Activated CD8-positive, alpha-beta memory T cell treated with anti-CD3 and anti-CD28 coated beads, Interleukin-2, amount 10 ng/mL, durations not matched to agents 7 days and 5 days (primary cell): ENCODE measurements at regions of chr10 and their contacts with region 1.

Region 1: DNA sequence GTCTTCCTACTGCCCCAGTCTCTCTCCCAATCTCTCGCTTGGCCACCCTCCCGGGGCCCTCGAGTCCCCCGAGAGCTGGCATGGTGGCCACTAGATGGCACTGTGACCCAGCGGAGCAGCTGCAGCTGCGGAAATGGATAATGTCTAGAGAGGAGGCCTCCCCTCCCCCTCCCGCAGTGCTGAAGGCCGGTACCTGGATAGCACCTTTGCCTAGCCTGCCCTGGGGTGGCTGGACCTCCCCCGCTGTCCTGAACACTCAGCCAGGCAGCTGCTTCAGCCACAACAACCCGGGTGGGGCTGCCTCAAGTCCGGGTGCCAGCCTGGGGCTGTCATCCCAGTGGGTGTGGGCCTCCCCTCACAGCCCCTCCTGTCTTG is 65.2 kb downstream of the GOLGA7B start:
- DNase-seq: peak; percentile 82
- ATAC-seq: peak; percentile 89
- H3K4me3 Mint-ChIP-seq: no peak overlapping the region
- H3K27ac Mint-ChIP-seq: no peak overlapping the region
- H3K4me1 Mint-ChIP-seq: no peaks in the 10 kb centered on the region
- H3K27me3 Mint-ChIP-seq: peaks cover 22% of the 10 kb centered on the region

Region 2: GRCh38 chr10:97903128-97904017 is 11.5 kb before region 1 on chr10:
- CTCF ChIA-PET with region 1: interaction called, 13 read pairs
- DNase-seq: no peak
- ATAC-seq: no peak
- H3K4me3 Mint-ChIP-seq: no peak overlapping the region
- H3K27ac Mint-ChIP-seq: no peak overlapping the region
- H3K4me1 Mint-ChIP-seq: no peaks in the 10 kb centered on the region
- H3K27me3 Mint-ChIP-seq: peaks cover 16% of the 10 kb centered on the region

Region 3: GRCh38 chr10:97939446-97939990 is 24.7 kb after region 1 on chr10:
- CTCF ChIA-PET with region 1: interaction called, 13 read pairs
- DNase-seq: no peak
- ATAC-seq: no peak
- H3K4me3 Mint-ChIP-seq: no peak overlapping the region
- H3K27ac Mint-ChIP-seq: no peak overlapping the region
- H3K4me1 Mint-ChIP-seq: no peaks in the 10 kb centered on the region
- H3K27me3 Mint-ChIP-seq: peaks cover 28% of the 10 kb centered on the region

Region 4: GRCh38 chr10:98028168-98028770 is 113.4 kb after region 1 on chr10:
- CTCF ChIA-PET with region 1: interaction called, 12 read pairs
- DNase-seq: peak; percentile 76
- ATAC-seq: peak; percentile 85
- H3K4me3 Mint-ChIP-seq: no peak overlapping the region
- H3K27ac Mint-ChIP-seq: no peak overlapping the region
- H3K4me1 Mint-ChIP-seq: no peaks in the 10 kb centered on the region
- H3K27me3 Mint-ChIP-seq: peaks cover 59% of the 10 kb centered on the region

Region 5: GRCh38 chr10:98038288-98038687 is 123.5 kb after region 1 on chr10:
- CTCF ChIA-PET with region 1: interaction called, 96 read pairs
- DNase-seq: no peak
- ATAC-seq: no peak
- H3K4me3 Mint-ChIP-seq: no peak overlapping the region
- H3K27ac Mint-ChIP-seq: no peak overlapping the region
- H3K4me1 Mint-ChIP-seq: peaks cover 1% of the 10 kb centered on the region
- H3K27me3 Mint-ChIP-seq: peaks cover 82% of the 10 kb centered on the region

Region 6: GRCh38 chr10:98045785-98046389 is 131.1 kb after region 1 on chr10:
- CTCF ChIA-PET with region 1: interaction called, 96 read pairs
- DNase-seq: peak; percentile 71
- ATAC-seq: peak; percentile 78
- H3K4me3 Mint-ChIP-seq: no peak overlapping the region
- H3K27ac Mint-ChIP-seq: no peak overlapping the region
- H3K4me1 Mint-ChIP-seq: peaks cover 2% of the 10 kb centered on the region
- H3K27me3 Mint-ChIP-seq: peaks cover 39% of the 10 kb centered on the region

Region 7: DNA sequence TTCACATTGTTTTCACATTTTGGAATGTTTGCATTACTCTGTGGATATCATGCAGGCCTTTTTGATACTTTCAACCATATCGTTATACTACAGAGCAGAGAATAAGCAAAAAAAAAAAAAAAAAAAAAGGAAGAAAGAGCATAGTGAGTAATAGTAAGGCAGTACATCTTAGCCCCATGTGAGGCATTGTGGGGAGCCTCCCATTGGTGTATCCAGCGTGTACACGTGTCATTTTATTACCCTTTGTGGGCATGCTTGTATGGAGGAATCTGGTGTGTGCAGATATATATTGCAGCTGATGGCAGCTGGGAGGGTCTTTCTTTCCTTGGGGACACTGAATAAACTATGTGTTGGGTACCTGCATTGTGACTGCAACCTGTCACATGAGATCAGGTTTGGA is 239.3 kb after region 1 on chr10:
- CTCF ChIA-PET with region 1: no interaction called
- DNase-seq: no peak
- ATAC-seq: no peak
- H3K4me3 Mint-ChIP-seq: no peak overlapping the region
- H3K27ac Mint-ChIP-seq: no peak overlapping the region
- H3K4me1 Mint-ChIP-seq: peaks cover 2% of the 10 kb centered on the region
- H3K27me3 Mint-ChIP-seq: no peaks in the 10 kb centered on the region